HEK293 (cell line): ENCODE measurements at regions of chr15 and their contacts with region 1.

Region 1: DNA sequence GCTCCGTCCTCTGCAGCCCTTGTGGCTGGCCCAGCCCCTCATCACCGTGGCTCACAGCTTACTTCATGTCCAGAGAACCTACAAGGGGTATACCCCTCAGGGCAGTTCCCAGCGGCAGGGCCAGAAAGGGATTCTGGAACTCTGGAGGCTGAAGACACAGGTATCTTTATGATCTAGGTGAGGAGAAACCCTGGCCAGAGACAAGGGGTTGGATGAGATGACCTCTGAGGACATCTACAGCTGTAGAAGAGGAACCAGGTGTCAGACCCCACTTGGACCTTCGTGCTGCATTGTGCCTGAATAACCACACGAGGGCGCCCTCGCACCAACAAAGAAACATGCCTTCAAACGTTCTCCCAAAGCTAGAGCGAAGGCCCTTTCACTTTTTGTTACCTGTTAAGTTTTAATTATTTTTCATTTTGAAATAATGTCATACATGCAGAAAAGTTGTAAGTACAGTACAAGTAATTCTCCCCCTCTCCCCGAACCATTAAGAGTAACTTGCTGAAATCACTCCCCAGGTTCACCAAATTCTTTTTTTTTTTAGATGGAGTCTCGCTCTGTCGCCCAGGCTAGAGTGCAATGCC is 118.7 kb upstream of the SMAD3 start:
- H3K4me3 ChIP-seq: no peak overlapping the region
- H3K27ac ChIP-seq: no peak overlapping the region
- H3K4me1 ChIP-seq: no peaks in the 10 kb centered on the region
- CTCF ChIP-seq: peak; percentile 86

Region 2: DNA sequence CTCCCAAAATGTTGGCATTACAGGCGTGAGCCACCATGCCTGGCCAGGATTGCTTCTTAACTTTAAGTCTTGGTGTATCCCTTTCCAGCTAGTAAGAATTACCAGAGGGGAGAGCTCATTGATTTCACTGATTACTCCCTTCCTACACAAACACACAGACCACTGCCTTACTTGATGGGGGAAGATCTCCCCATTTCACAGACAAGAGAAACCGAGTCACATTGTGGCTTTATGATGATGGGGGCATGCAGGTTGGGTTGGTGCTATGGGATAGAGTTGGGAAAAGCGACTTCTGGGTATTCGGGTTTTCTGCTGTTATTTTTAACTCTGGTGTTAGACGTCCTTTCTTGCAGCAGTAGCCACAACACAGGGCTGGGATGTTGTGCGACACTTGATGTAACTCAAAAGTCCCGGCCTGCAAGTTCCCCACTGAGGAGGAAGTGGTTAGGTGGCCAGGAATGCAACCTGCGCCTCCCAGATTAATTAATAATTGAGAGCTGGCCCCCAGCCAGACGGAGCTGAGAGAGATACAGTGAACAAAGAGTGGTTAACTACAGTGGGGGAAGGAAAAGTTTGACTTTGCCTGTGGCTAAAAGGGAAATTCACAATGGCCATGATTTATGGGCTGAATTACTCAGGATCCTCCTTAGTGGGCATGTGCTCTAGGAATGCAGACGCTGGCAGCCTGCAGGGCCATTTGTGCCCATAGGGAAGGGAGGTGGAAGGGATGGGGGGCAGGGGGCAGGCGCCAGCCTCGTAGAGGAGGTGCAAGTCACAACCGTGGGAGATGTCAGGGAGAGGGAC is 181.0 kb before region 1 on chr15:
- CTCF ChIA-PET with region 1: no interaction called
- POLR2A ChIA-PET with region 1: no interaction called
- H3K4me3 ChIP-seq: peak overlapping the region; percentile 3; the same call in 1 of the 2 replicates
- H3K27ac ChIP-seq: no peak overlapping the region
- H3K4me1 ChIP-seq: peaks cover 38% of the 10 kb centered on the region
- CTCF ChIP-seq: no peak

Region 3: DNA sequence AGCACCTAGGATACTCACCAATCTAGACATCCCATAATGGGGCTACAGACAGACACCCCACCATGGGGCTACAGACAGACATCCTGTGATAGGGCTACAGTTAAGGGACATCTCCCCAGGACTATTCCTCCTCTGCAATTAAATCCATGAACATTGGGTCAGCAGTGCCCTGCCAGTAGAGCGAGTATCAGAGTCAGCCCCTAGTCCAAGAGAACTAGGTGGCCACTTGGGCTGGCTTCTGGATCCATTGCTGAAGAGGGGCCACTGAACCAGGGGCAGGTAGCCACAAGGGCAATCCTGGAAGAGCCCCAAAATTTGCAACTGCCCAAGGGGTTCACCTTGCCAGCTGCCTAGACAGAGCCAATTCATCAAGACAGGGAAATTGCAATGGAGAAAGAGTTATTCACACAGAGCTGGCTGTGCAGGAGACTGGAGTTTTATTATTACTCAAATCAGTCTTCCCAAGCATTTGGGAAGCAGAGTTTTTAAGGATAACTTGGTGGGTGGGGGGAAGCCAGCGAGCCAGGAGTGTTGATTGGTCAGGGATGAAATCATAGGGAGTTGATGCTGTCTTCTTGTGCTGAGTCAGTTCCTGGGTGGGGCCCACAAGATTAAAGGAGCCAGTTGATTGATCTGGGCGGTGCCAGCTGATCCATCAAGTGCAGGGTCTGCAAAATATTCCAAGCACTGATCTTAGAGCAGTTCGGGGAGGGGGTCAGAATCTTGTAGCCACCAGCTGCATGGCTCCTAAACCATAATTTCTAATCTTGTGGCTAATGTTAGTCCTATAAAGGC is 51.5 kb before region 1 on chr15:
- CTCF ChIA-PET with region 1: no interaction called
- POLR2A ChIA-PET with region 1: no interaction called
- H3K4me3 ChIP-seq: no peak overlapping the region
- H3K27ac ChIP-seq: no peak overlapping the region
- H3K4me1 ChIP-seq: peaks cover 4% of the 10 kb centered on the region; the same call in 1 of the 2 replicates
- CTCF ChIP-seq: no peak

Region 4: DNA sequence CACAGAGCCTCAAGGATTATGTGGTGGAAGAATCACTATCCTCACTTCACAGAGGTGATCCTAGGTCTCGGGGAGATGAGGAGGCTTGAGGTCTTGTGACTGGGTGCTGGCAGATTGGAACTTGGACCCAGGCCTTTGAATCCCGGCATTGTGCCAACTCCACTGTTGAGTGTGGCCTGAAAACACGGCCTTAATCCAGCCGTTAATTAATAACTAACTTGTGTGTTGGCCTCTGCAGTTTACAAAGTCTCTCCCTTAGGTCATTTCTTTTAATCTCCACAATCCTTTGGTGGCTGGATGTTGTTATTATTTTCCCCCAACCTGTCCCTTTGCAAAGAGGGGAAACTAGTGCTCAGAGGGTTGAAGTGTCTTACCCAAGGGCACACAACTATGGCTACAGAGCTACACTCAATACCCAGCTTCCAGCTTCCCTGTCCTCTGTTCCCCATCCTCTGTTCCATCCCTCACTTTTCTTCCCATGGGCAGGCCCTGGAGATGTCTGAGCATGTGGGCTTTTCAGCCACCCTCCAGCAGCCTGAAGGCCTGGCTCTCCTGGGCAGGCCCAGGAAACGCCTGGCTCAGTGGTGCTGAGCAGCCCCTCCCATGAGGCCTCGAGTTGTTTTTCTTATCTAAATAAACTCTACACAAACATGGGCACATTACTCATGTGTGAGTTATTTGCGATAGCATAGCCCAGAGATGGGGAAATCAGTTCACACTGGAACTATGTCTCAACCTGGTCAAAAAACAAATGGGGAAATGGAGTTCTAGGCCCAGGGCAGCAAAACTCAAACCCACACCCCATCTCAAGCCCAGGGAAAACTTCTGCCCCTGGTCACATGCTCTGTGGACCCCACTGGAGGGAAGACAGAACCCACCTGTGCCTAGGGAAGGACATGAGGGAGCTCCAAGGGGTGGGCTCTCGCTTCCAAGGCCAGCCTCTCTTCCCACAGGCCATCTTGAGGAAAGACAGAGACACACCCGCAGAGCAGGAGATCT is 101.9 kb after region 1 on chr15:
- CTCF ChIA-PET with region 1: interaction called, 10 read pairs
- POLR2A ChIA-PET with region 1: no interaction called
- H3K4me3 ChIP-seq: no peak overlapping the region
- H3K27ac ChIP-seq: peak overlapping the region; percentile 77
- H3K4me1 ChIP-seq: peaks cover 23% of the 10 kb centered on the region
- CTCF ChIP-seq: no peak

Region 5: GRCh38 chr15:67240235-67241131 is 293.8 kb after region 1 on chr15:
- CTCF ChIA-PET with region 1: interaction called, 16 read pairs
- POLR2A ChIA-PET with region 1: no interaction called
- H3K4me3 ChIP-seq: no peak overlapping the region
- H3K27ac ChIP-seq: no peak overlapping the region
- H3K4me1 ChIP-seq: peaks cover 22% of the 10 kb centered on the region
- CTCF ChIP-seq: peak; percentile 40

Region 6: GRCh38 chr15:67433495-67434099 is 486.9 kb after region 1 on chr15:
- CTCF ChIA-PET with region 1: interaction called, 18 read pairs
- POLR2A ChIA-PET with region 1: no interaction called
- H3K4me3 ChIP-seq: no peak overlapping the region
- H3K27ac ChIP-seq: no peak overlapping the region
- H3K4me1 ChIP-seq: no peaks in the 10 kb centered on the region
- CTCF ChIP-seq: no peak